GM13976 (cell line): ENCODE measurements at regions of chr4 and their contacts with region 1.

Region 1: GRCh38 chr4:88514557-88515511 is 8.7 kb downstream of the PYURF start:
- DNase-seq: no peak
- CTCF ChIP-seq: no peak

Region 2: DNA sequence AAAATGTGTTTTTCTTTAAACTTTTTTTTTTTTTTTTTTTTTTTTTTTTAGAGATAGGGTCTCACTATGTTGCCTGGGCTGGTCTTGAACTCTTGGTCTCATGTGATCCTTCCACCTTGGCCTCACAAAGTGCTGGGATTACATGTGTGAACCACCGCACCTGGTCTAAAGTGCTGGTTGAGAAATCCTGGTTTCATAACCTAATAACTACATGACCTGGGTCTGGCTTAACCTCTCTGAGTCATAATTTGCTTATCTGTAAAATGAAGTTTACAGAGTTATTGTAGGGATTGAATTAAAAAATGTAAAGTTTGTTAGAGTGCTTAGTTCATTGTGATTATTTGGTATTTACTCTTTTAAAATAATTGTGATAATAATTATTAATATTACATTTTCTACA is 1197.3 kb before region 1 on chr4:
- in situ Hi-C with region 1: no loop called
- DNase-seq: no peak
- CTCF ChIP-seq: no peak

Region 3: DNA sequence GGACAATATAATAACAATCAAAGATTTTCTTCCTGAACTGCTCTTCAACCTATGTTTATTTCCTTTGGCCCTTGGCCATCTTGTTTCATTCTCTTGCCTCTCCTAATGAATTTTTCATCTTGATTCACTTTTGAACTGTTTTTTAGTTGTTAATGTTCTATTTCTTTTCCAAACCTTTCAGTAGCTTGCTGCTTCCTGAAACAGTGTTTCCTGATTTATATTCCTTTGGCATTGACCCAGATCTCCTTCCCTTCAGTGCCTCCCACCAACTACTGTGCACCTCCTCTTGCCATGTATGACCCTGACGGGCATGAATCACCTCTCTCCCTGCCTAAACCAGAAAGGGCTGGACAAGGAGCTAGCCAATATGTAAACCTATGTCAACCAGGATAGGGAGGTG is 564.9 kb before region 1 on chr4:
- in situ Hi-C with region 1: no loop called
- DNase-seq: no peak
- CTCF ChIP-seq: no peak

Region 4: DNA sequence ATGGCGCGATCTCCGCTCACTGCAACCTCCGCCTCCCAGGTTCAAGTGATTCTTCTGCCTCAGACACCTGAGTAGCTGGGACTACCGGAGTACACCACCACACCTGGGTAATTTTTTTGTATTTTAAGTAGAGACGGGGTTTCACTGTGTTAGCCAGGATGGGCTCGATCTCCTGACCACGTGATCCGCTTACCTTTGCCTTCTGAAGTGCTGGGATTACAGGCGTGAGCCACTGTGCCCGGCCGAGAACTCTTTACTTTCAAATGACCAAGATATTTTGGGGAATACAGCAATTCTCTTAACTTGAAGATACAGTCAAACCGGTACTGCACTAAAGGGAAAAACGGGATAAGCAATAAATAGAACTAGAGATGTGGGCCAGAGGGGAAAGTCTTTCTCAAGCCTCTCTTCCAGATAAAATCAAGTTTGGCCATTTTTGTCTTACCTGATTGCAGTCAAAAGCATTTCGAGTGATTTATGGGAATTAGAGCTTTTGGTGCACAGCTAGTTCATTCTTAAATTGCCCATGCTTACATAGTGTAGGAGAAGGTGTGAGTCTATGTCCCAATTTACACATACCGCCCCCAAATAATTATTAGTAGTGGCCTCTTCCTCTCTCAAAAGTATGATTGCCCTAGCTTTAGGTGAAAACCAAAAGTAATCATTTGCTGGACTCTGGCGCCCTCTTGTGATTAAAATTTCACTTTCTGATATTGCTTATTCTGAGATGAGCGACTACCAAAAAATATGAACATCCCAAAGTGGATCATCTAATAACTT is 303.2 kb before region 1 on chr4:
- in situ Hi-C with region 1: loop called (anchors 5 kb)
- DNase-seq: peak; percentile 55
- CTCF ChIP-seq: peak; percentile 62

Region 5: GRCh38 chr4:88378691-88379559 is 135.9 kb before region 1 on chr4 and contains the start of gene HERC6:
- in situ Hi-C with region 1: loop called (anchors 10 kb)
- DNase-seq: peak; percentile 86
- CTCF ChIP-seq: peak; percentile 88